IMR-90 (cell line): ENCODE measurements at regions of chr3 and their contacts with region 1.

Region 1: GRCh38 chr3:184513276-184514170 is 48.1 kb upstream of the EPHB3 start:
- DNase-seq: peak; percentile 67
- ATAC-seq: peak; percentile 100
- H3K4me3 ChIP-seq: no peak overlapping the region; the same call in 1 of the 2 replicates
- H3K27ac ChIP-seq: no peak overlapping the region
- H3K4me1 ChIP-seq: no peaks in the 10 kb centered on the region
- H3K27me3 ChIP-seq: peaks cover 60% of the 10 kb centered on the region
- CTCF ChIP-seq: peak; percentile 76
- POLR2A ChIP-seq: no peak
- RAD21 ChIP-seq: peak; percentile 75

Region 2: DNA sequence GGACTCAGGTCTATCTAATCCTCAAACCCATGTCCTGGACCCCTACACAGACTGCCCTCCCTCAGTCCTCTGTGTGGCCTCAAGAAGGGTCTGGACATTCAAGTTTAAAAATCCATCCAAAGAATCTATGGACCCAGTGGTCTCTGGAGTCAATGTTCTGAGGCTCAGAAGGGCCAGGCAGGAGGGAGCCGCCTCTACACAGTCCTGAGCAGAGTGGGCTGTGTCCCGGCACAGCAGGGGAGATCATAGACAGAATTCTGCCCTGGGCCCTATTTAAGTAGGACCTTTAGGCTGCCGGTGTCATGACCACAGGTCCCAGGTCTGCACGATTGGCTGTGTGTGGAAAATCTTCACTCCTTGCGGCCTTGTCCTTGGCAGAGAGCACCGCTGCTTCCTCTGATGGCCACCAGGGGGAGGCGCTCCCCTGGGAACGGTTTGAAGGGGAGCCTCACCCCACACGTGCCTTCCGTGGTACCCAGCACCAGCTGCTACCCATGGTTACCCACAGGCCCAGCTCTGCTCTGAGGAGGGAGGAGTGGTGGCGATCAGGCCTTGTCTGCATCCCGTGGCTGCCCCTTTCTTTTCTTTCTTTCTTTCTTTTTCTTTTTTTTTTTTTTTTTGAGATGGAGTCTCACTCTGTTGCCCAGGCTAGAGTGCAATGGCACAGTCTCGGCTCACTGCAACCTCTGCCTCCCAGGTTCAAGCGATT is 95.8 kb before region 1 on chr3:
- CTCF ChIA-PET with region 1: interaction called, 6 read pairs
- POLR2A ChIA-PET with region 1: no interaction called
- dilution Hi-C with region 1: no loop called
- in situ Hi-C with region 1: loop called (anchors 10 kb)
- intact Hi-C with region 1: loop called (anchors 1 kb)
- DNase-seq: peak; percentile 51
- ATAC-seq: peak; percentile 95
- H3K4me3 ChIP-seq: no peak overlapping the region
- H3K27ac ChIP-seq: no peak overlapping the region
- H3K4me1 ChIP-seq: no peaks in the 10 kb centered on the region
- H3K27me3 ChIP-seq: peaks cover 21% of the 10 kb centered on the region
- CTCF ChIP-seq: peak; percentile 82
- POLR2A ChIP-seq: no peak
- RAD21 ChIP-seq: peak; percentile 85

Region 3: DNA sequence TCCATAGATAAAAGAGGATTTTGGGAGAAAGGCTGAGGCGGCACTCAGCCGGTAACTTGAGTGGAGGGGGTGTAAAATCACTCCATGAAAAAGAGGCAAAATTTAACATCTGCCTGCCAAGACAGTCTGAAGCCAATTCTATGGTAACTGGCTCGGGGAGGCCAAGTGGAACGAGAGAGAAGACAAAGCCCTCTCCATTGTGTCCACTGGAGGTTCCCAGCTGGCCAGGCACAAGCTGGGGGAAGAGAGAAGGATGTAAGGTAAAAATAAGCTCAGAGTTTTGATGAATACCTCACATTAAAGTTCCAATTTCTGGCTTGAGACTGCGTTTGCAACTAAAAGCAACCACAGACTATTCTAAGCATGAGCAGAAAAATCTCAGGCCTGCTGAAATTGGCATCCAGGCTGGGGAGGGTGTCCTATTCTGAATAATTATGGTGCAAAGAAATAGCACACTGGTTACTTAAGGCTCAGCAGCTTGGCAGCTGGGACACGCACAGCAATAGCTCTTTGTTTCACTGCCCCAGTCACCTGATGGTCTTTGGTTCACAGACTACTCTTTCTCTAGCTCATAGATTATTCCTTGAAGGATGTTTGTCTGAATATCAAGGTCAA is 84.9 kb before region 1 on chr3:
- CTCF ChIA-PET with region 1: interaction called, 4 read pairs
- POLR2A ChIA-PET with region 1: no interaction called
- dilution Hi-C with region 1: no loop called
- in situ Hi-C with region 1: loop called (anchors 10 kb)
- intact Hi-C with region 1: no loop called
- DNase-seq: no peak
- ATAC-seq: no peak
- H3K4me3 ChIP-seq: no peak overlapping the region
- H3K27ac ChIP-seq: no peak overlapping the region
- H3K4me1 ChIP-seq: no peaks in the 10 kb centered on the region
- H3K27me3 ChIP-seq: peaks cover 16% of the 10 kb centered on the region
- CTCF ChIP-seq: no peak
- POLR2A ChIP-seq: no peak
- RAD21 ChIP-seq: no peak